Endothelial cell of umbilical vein (primary cell): ENCODE measurements at regions of chrX and their contacts with region 1.

Region 1: DNA sequence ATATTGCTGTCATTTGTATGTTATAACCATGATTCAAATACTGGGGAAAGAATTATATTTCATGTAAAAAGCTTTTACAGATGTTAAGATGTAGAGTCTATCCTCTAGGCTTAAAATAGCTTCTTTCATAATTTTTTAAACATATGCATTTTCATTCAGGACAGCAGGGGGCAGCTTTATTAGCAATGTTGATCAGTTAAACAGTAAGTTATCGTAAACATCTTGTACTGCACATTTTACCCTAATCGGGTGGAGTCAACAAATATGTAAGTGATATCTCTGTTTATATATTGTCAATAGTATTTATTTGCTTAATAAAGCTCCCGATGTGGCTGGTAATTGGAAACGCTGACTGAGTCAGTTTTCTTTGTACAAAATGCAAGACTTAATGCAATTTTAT is 142.5 kb upstream of the MED14 start:
- DNase-seq: peak; percentile 60
- H3K4me3 ChIP-seq: no peak overlapping the region
- H3K27ac ChIP-seq: no peak overlapping the region
- H3K4me1 ChIP-seq: peaks cover 3% of the 10 kb centered on the region
- H3K27me3 ChIP-seq: no peaks in the 10 kb centered on the region
- CTCF ChIP-seq: peak; percentile 8 to 20
- POLR2A ChIP-seq: no peak

Region 2: DNA sequence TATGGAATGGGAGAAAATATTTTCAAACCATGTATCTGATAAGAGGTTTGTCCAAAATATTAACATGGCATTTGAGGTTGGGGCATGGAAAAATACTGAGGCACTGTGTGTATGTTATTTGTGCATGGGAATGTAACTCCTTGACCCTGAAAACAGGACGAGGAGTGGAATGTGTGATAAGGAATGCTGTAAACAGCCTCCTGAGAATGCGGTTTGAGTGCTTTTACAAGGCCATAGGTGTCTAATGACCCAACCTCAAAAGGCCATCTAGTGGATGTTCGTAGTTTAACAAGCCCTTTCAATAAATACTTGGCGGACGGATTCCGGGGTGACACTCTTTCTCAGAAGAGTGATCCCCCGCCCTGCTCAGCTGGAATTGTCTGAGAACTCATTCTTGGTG is 44.4 kb after region 1 on chrX:
- CTCF ChIA-PET with region 1: interaction called, 13 read pairs
- POLR2A ChIA-PET with region 1: no interaction called
- dilution Hi-C with region 1: no loop called
- intact Hi-C with region 1: loop called (anchors 2 kb)
- DNase-seq: peak; percentile 76
- H3K4me3 ChIP-seq: no peak overlapping the region
- H3K27ac ChIP-seq: no peak overlapping the region
- H3K4me1 ChIP-seq: peaks cover 4% of the 10 kb centered on the region
- H3K27me3 ChIP-seq: no peaks in the 10 kb centered on the region
- CTCF ChIP-seq: peak; percentile 12 to 20
- POLR2A ChIP-seq: no peak

Region 3: DNA sequence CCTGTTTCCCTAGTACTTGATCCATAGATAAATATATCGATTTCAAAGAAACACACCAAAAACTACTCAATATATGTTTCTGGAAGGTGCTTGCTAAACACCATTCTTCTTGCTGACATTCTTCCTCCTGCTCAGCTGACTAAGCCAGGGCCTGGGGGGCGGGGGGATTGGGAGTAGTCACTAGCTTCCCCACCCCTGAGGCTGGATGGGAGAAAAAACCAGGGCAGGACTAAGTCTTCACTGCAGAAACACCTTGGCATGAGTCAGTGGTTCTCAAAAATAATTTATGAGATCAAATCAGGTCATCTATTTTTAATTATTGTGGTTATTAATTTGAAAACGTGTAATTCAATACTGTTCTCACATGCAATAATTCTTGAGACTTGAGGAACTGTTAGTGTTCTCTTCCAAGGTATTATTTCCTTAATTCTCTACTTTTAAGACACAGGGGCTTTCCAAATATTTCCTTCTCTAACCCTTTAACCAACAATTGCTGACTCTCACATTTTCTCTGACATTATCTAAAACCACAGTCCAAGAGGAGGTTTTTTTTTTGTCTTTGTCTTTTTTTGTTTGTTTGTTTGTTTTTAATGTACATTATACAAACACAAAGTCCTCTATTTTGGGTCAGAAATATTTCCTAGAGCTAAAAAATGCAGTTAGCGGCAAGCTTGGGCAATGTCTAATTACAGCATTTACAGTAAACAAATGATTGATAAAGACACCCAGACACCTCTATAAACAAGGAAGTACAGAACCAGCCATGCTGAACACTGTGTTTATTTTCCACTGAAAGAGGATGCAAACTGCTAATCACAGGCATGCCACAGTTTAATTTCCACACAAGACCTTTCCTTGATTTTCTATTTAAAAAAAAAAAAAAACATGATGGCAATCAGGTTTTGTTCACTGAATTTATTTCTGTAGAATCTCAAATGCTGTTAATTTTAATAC is 87.0 kb after region 1 on chrX:
- CTCF ChIA-PET with region 1: no interaction called
- POLR2A ChIA-PET with region 1: no interaction called
- dilution Hi-C with region 1: no loop called
- intact Hi-C with region 1: no loop called
- DNase-seq: no peak
- H3K4me3 ChIP-seq: no peak overlapping the region
- H3K27ac ChIP-seq: no peak overlapping the region
- H3K4me1 ChIP-seq: no peaks in the 10 kb centered on the region
- H3K27me3 ChIP-seq: no peaks in the 10 kb centered on the region
- CTCF ChIP-seq: no peak
- POLR2A ChIP-seq: no peak

Region 4: DNA sequence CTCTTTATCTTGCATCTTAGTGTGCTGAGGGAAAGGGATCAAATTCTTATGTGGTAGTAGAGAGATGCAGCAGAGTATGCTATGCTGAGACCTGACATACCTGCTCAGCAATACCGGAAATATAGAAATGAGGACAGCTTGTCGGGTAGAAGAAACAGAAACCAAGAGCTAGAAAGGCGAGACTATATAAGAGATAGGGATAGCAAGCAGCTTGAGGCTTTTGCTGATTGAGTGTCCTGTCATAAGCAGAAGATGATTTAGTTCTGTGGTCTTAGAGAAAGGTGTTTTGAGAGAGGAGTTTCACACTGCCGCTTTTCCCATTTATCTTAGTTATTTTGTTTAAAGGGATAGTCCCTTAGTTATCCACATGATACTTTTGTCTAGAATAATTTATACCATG is 239.1 kb after region 1 on chrX:
- CTCF ChIA-PET with region 1: interaction called, 56 read pairs
- POLR2A ChIA-PET with region 1: no interaction called
- dilution Hi-C with region 1: no loop called
- intact Hi-C with region 1: loop called (anchors 1 kb)
- DNase-seq: no peak
- H3K4me3 ChIP-seq: no peak overlapping the region
- H3K27ac ChIP-seq: no peak overlapping the region
- H3K4me1 ChIP-seq: peaks cover 4% of the 10 kb centered on the region
- H3K27me3 ChIP-seq: no peaks in the 10 kb centered on the region
- CTCF ChIP-seq: no peak
- POLR2A ChIP-seq: no peak

Region 5: GRCh38 chrX:41250867-41251266 is 373.0 kb after region 1 on chrX:
- CTCF ChIA-PET with region 1: interaction called, 6 read pairs
- POLR2A ChIA-PET with region 1: no interaction called
- dilution Hi-C with region 1: no loop called
- intact Hi-C with region 1: loop called (anchors 2 kb)
- DNase-seq: peak; percentile 59
- H3K4me3 ChIP-seq: no peak overlapping the region
- H3K27ac ChIP-seq: peak overlapping the region; percentile 59
- H3K4me1 ChIP-seq: no peaks in the 10 kb centered on the region
- H3K27me3 ChIP-seq: no peaks in the 10 kb centered on the region
- CTCF ChIP-seq: no peak
- POLR2A ChIP-seq: no peak